ENCODE measurements at regions of chr7 and their contacts with region 1.

Region 1: GRCh38 chr7:77765906-77766800 is 32.1 kb downstream of the TMEM60 start:
- DNase-seq: no peak
- ATAC-seq: peak in 1 of 2 donors; percentile 20
- H3K4me3 ChIP-seq: no peak overlapping the region
- H3K27ac ChIP-seq: no peak overlapping the region
- H3K4me1 ChIP-seq: peaks cover 1% of the 10 kb centered on the region
- H3K27me3 ChIP-seq: no peaks in the 10 kb centered on the region

Region 2: DNA sequence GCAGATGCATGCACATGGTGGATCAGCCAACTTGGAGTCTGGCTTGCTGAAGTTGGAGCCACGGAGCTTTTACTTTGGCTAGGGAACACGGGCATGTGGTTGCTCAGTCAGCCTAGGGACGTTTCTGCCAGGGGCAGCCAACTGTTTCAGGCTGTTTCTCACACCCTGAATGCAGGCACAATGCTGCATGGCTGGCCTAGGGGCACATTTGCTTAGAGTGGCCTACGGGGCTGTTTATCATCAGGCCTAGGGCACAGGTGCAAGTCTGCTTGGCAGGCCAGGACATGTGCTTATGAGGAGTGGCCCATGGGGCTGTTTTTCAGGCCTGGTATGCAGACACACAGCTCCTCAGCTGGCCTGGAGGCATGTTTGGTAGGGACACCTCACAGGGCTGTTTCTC is 457.4 kb before region 1 on chr7:
- intact Hi-C with region 1: no loop called
- DNase-seq: peak in 1 of 3 donors; percentile 63
- ATAC-seq: peak; percentile 14 to 45
- H3K4me3 ChIP-seq: no peak overlapping the region
- H3K27ac ChIP-seq: no peak overlapping the region
- H3K4me1 ChIP-seq: peaks cover 7% of the 10 kb centered on the region
- H3K27me3 ChIP-seq: no peaks in the 10 kb centered on the region

Region 3: DNA sequence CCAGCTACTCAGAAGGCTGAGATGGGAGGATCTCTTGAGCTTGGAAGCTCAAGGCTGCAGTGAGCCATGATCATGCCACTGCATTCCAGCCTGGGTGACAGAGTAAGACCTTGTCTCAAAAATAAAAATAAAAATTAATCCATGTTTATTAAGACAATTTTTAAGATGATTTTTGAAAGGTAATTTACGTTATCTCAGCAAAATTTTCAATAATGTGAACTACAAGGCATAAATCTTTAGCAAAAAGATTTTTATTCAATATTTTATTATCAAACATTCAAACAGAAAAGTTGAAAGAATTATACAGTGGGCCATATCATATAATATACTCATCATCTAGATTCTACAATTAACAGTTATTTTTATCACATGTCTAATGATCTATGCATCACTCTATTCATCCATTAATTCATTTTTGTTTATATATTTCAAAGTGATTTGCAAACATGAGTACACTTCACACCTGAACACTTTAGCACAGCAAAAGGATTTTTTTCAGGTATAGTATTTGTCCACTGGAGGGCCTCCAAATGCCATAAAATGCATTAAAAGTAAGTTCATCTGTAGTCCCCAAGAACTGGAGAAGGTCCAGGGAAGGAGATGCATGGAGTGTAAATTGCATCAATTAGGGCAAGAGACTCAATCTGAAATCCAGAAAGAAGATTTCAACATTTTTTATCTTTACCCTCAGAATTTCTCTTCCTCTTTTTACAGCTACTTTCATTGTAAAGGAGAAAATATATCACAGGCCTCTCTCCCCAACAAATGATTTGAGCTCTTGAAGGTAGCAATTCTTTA is 108.5 kb before region 1 on chr7:
- intact Hi-C with region 1: loop called in 1 of 4 experiments (anchors 10 kb)
- DNase-seq: no peak
- ATAC-seq: no peak
- H3K4me3 ChIP-seq: no peak overlapping the region
- H3K27ac ChIP-seq: no peak overlapping the region
- H3K4me1 ChIP-seq: no peaks in the 10 kb centered on the region
- H3K27me3 ChIP-seq: no peaks in the 10 kb centered on the region

Measured in right cardiac atrium (tissue), 5 donors.